CD14-positive monocyte (primary cell): ENCODE measurements at regions of chr19 and their contacts with region 1.

Region 1: GRCh38 chr19:11089254-11090053 is at the start of gene LDLR:
- DNase-seq: peak; percentile 84 to 95 (median 90)
- H3K4me3 ChIP-seq: peak within 1 kb of the TSS; percentile 58 to 81 (median 78)
- H3K4me3 Mint-ChIP-seq: peak within 1 kb of the TSS; percentile 86 to 89
- H3K27ac ChIP-seq: peak within 1 kb of the TSS; percentile 84 to 97
- H3K27ac Mint-ChIP-seq: peak within 1 kb of the TSS; percentile 88 to 100 (median 100)
- H3K4me1 ChIP-seq: peaks cover 58% of the 10 kb centered on the region in 2 donors
- H3K4me1 Mint-ChIP-seq: peaks cover 44% of the 10 kb centered on the region
- H3K27me3 ChIP-seq: peaks cover 0 to 10% of the 10 kb centered on the region in 2 donors
- H3K27me3 Mint-ChIP-seq: peaks cover 1 to 8% (median 7%) of the 10 kb centered on the region in 3 donors
- CTCF ChIP-seq: no peak
- polyA plus RNA-seq, gene LDLR: 14.3 to 21.2 (median 19.8) TPM

Region 2: DNA sequence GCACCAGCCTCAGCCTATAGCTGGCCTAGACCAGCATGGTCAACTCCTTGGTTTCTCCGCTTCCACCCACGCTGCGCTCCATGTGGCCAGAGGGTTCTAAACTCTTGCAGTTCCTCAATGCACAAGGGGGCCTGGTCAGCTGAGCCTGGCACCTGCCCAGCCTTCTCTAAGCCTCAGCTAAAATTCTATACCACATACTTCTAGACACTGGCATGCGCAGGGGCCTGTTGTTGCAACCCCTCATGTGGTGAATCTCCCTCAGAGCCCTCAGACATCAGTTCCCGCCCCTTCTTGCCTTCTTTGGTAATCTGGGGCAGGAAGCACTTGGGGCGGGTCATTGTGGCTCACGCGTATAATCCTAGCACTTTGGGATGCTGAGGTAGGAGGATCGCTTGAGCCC is 19.9 kb before region 1 on chr19:
- intact Hi-C with region 1: loop called in 1 of 2 experiments (anchors 2 kb)
- DNase-seq: peak in 2 of 3 donors; percentile 43 to 44
- H3K4me3 ChIP-seq: no peak overlapping the region
- H3K4me3 Mint-ChIP-seq: peak overlapping the region in 1 of 2 donors; percentile 8
- H3K27ac ChIP-seq: no peak overlapping the region
- H3K27ac Mint-ChIP-seq: peak overlapping the region in 3 of 7 donors; percentile 63 to 75 (median 70)
- H3K4me1 ChIP-seq: peaks cover 39 to 43% of the 10 kb centered on the region in 2 donors
- H3K4me1 Mint-ChIP-seq: peaks cover 46% of the 10 kb centered on the region
- H3K27me3 ChIP-seq: no peaks in the 10 kb centered on the region
- H3K27me3 Mint-ChIP-seq: peaks cover 1 to 10% (median 10%) of the 10 kb centered on the region in 3 donors
- CTCF ChIP-seq: no peak